Heart left ventricle (tissue), 16 donors: ENCODE measurements at regions of chr4 and their contacts with region 1.

Region 1: DNA sequence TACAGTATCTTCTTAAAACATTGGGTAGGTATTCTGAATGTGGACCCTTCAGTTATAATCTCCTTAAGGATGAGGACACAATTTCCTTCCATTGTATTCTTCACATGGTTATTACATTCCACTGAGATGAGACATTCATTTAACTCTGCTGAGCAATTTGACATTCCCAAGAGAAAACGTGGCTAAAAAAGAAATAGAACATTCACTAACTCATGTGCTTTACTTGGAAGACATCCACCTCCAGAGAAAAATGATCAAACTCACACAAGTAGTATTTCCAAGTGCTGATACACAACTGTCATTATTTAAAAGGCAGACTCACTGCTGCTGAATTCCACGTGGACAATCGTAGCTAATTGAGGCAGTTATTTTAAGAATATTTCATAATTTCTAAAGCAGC is 227.9 kb upstream of the ANKRD50 start:
- DNase-seq: no peak
- ATAC-seq: peak; percentile 23 to 76 (median 48)
- H3K4me3 ChIP-seq: no peak overlapping the region
- H3K27ac ChIP-seq: peak overlapping the region in 9 of 12 donors; percentile 8 to 61 (median 45)
- H3K4me1 ChIP-seq: peaks cover 2 to 43% (median 22%) of the 10 kb centered on the region in 12 donors
- H3K27me3 ChIP-seq: no peaks in the 10 kb centered on the region
- CTCF ChIP-seq: no peak
- POLR2A ChIP-seq: no peak

Region 2: GRCh38 chr4:124432500-124432899 is 507.9 kb before region 1 on chr4:
- intact Hi-C with region 1: loop called in 1 of 10 experiments (anchors 10 kb)
- DNase-seq: no peak
- ATAC-seq: peak in 1 of 4 donors; percentile 29
- H3K4me3 ChIP-seq: no peak overlapping the region
- H3K27ac ChIP-seq: no peak overlapping the region
- H3K4me1 ChIP-seq: peaks cover 0 to 22% (median 5%) of the 10 kb centered on the region in 12 donors
- H3K27me3 ChIP-seq: no peaks in the 10 kb centered on the region
- CTCF ChIP-seq: no peak
- POLR2A ChIP-seq: no peak